PC-3 (cell line): ENCODE measurements at regions of chr15 and their contacts with region 1.

Region 1: DNA sequence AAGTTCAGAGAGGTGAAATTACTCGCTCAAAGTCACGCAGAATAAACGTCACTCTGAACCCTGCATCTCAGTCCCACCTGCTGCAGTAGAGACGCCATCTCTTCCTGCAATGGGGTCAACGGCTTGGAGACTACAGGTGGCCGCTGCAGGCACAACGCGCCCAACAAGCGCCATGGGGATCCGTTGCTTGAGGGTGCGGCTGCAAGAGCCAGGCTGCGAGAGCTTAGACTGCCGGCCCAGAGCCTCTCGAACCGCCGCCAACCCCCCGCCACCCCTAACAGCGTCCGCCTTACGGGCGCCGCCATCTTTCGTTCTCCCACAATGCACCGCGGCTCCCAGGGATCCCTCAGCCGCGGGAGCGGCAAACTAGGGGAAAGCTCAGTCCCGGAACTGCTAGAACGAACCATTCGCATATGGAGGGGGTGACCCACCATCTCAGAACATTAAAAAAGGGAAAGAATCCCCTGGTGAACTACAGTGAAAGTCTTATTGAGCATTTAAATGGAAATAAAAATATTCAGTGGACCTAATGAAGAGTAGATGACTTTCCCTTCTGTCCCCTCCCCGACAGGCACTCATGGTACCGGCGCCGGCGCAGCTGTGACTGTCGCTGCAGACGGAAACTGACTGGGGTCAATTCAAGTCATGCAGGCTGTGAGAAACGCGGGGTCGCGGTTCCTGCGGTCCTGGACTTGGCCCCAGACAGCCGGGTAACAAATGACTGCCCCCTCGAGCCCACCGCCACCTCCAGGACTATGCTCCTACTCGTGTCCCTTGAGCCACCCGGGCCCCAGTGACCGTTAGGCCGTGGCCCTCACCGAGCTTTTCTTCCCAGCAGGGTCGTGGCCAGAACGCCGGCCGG is at the starts of genes MRPL46 and MRPS11:
- DNase-seq: peak; percentile 86
- ATAC-seq: peak; percentile 86
- H3K4me3 ChIP-seq: peak within 1 kb of the TSS; percentile 91
- H3K27ac ChIP-seq: peak within 1 kb of the TSS; percentile 73
- H3K4me1 ChIP-seq: peaks cover 21% of the 10 kb centered on the region
- H3K27me3 ChIP-seq: no peaks in the 10 kb centered on the region
- CTCF ChIP-seq: no peak
- total RNA-seq, gene MRPL46: 33.9 and 42.7 TPM in 2 replicates
- total RNA-seq, gene MRPS11: 76.0 and 92.7 TPM in 2 replicates

Region 2: GRCh38 chr15:88139936-88140335 is 327.4 kb before region 1 on chr15:
- CTCF ChIA-PET with region 1: no interaction called
- POLR2A ChIA-PET with region 1: no interaction called
- intact Hi-C with region 1: no loop called
- DNase-seq: no peak
- ATAC-seq: no peak
- H3K4me3 ChIP-seq: no peak overlapping the region
- H3K27ac ChIP-seq: no peak overlapping the region
- H3K4me1 ChIP-seq: no peaks in the 10 kb centered on the region
- H3K27me3 ChIP-seq: no peaks in the 10 kb centered on the region
- CTCF ChIP-seq: no peak

Region 3: DNA sequence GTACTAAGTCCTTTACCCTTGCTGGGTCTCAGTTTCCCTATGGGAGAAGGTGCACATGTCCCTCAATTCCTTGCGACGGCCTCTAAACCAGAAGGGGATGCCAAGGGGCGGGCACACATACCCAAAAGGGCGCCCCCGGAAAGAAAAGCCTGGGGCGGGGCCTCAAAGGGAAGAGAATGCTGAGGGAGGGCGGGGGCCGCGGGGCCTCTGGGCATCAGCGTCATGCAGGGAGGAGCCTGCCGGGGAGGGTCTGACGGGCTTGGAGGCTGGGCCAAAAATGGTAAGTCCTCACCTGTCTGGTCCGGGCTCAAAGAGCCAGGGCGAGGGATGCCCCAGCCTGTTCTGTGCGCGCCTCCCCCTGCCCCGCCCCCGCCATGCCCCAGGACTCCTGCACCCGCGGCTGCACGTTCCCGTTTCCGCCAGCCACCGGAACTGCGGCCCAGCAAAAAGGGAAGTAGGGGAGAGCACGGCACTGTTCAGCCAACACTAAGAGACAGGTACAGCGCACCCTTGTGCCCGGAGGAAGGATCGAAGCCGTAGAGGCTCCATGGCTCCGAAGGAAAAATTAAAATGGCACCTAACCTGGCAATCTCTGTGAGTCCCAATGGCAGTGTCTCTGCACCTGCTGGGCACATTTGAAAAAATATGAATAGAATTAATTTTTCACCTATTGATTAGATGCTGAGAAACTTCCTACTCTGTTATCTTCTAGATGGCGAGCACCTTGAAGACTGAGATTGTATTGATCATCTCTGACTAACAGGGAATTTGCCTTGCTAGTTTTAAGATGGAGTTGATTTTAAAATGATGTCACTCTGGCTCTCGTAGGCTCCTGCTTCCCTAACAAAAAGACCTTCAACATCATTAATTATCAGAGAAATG is 79.2 kb after region 1 on chr15 and contains the start of gene DET1:
- CTCF ChIA-PET with region 1: no interaction called
- POLR2A ChIA-PET with region 1: no interaction called
- intact Hi-C with region 1: loop called (anchors 5 kb)
- DNase-seq: peak; percentile 93
- ATAC-seq: peak; percentile 96
- H3K4me3 ChIP-seq: peak within 1 kb of the TSS; percentile 69
- H3K27ac ChIP-seq: peak within 1 kb of the TSS; percentile 40
- H3K4me1 ChIP-seq: no peaks in the 10 kb centered on the region; the same call in 1 of the 2 replicates
- H3K27me3 ChIP-seq: no peaks in the 10 kb centered on the region
- CTCF ChIP-seq: peak; percentile 76
- total RNA-seq, gene DET1: 1.5 and 1.6 TPM in 2 replicates